Activated naive CD4-positive, alpha-beta T cell treated with anti-CD3 and anti-CD28 coated beads, Interleukin-2, amount 10 ng/mL, durations not matched to agents 7 days and 5 days (primary cell): ENCODE measurements at regions of chr2 and their contacts with region 1.

Region 1: DNA sequence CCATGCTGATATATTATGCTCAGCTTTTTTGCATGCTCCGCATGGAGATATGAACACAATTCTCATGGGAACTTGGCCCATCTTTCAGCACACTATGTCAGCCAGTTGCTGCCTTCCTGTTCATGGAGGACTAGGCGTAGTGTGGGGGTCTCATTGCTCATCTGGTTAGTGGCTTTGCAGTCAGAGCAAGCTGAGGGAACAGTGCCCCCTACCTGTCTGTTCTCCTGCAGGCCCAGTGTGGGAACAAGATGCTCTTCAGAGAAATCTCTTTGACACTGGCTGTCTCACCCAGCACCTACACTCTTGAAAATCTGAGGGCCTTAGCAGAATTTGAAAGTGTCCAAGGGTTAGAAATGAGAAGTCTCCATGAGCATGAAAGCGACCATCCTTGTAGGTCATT is 47.1 kb downstream of the SPTBN1 start:
- DNase-seq: peak; percentile 56
- H3K4me3 Mint-ChIP-seq: no peak overlapping the region
- H3K27ac Mint-ChIP-seq: no peak overlapping the region
- H3K4me1 Mint-ChIP-seq: no peaks in the 10 kb centered on the region
- H3K27me3 Mint-ChIP-seq: peaks cover 12% of the 10 kb centered on the region

Region 2: DNA sequence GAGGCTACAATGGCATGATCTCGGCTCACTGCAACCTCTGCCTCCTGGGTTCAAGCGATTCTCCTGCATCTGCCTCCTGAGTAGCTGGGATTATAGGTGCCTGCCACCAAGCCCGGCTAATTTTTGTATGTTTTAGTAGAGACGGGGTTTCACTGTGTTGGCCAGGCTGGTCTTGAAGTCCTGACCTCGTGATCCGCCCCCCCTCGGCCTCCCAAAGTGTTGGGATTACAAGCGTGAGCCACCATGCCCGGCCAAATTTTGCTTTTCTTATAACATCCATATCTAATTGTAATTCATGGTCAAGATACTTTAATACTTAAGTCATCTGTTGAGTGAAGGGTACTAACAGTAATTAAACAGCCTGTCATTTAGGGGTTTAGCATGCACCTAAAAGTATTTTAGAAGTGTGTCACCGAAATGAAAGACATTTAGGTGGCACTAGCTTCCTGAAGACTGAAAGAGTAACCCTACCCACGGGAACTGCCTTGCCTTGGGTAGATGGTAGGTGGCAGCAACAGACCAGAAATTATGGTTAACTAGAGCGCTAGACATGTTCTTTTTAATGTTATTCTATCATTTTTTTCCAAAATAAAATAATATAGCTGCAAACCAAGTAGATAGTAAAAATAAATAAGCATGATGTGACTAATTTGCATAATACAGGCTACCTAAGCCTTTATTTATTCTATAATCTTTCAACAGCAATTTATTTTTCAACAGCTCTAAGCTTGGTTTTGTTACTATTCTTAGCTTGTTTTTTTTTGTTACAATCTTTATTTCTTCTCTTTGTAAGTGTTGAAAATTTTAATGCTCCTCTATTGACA is 396.3 kb before region 1 on chr2:
- CTCF ChIA-PET with region 1: interaction called, 26 read pairs
- DNase-seq: peak; percentile 56
- H3K4me3 Mint-ChIP-seq: no peak overlapping the region
- H3K27ac Mint-ChIP-seq: no peak overlapping the region
- H3K4me1 Mint-ChIP-seq: peaks cover 9% of the 10 kb centered on the region
- H3K27me3 Mint-ChIP-seq: peaks cover 17% of the 10 kb centered on the region

Region 3: DNA sequence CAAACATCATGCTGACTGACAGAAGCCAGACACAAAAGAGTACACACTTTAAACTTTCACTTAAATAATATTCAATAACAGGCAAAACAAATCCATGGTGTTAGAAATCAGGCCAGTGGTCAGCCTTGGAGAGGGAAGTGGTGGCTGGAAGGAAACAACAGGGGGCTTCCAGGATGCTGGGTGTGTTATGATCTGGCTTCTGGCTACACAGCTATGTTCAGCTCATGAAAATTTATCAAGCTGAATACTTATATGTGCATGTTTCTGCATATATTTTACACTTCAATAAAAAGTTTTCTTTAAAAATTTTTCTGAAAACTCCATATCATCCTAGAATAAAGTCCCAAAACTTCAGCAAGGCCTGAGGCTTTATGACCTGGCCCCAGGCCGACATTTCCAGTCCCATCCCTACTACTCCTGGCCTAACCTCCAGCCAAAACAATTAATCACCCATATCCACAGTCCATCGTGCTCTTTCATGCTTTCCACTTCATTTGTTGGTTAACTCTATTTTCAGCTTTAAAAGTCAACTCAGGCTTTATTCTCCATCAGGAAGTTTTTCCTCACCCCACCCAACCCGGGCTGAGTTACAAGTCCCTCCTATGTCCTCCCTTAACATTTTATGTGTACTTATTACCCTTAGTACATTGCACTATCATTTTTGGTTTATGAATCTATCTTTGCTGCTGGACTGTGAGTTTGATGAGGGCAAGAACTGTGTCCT is 74.9 kb before region 1 on chr2:
- CTCF ChIA-PET with region 1: no interaction called
- DNase-seq: no peak
- H3K4me3 Mint-ChIP-seq: no peak overlapping the region
- H3K27ac Mint-ChIP-seq: no peak overlapping the region
- H3K4me1 Mint-ChIP-seq: peaks cover 9% of the 10 kb centered on the region
- H3K27me3 Mint-ChIP-seq: no peaks in the 10 kb centered on the region

Region 4: DNA sequence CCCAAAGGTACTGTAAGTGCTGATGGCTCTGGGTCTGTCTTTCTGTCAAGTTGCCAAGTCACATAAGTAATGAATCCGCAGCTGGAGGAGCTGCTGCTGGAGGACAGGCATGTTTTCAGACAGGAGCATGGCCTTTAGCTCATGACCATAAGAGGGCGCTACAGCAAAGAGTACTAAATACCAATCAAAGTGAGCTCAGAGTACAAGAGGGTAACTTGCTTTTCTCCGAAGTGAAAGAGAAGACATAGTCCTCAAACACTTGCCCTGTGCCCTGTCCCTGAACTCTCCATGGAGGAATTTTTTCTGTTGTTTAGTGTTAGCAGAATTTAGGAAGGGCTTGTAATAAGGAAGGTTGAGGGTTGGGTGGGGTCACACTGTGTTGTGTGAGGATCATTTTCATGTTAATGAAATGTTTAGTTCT is 162.3 kb after region 1 on chr2:
- CTCF ChIA-PET with region 1: no interaction called
- DNase-seq: peak; percentile 57
- H3K4me3 Mint-ChIP-seq: no peak overlapping the region
- H3K27ac Mint-ChIP-seq: peak overlapping the region; percentile 73
- H3K4me1 Mint-ChIP-seq: peaks cover 17% of the 10 kb centered on the region
- H3K27me3 Mint-ChIP-seq: no peaks in the 10 kb centered on the region